Activated B cell treated with CpG ODN at 0.5 μM for 24 hours (primary cell): ENCODE measurements at regions of chr9 and their contacts with region 1.

Region 1: DNA sequence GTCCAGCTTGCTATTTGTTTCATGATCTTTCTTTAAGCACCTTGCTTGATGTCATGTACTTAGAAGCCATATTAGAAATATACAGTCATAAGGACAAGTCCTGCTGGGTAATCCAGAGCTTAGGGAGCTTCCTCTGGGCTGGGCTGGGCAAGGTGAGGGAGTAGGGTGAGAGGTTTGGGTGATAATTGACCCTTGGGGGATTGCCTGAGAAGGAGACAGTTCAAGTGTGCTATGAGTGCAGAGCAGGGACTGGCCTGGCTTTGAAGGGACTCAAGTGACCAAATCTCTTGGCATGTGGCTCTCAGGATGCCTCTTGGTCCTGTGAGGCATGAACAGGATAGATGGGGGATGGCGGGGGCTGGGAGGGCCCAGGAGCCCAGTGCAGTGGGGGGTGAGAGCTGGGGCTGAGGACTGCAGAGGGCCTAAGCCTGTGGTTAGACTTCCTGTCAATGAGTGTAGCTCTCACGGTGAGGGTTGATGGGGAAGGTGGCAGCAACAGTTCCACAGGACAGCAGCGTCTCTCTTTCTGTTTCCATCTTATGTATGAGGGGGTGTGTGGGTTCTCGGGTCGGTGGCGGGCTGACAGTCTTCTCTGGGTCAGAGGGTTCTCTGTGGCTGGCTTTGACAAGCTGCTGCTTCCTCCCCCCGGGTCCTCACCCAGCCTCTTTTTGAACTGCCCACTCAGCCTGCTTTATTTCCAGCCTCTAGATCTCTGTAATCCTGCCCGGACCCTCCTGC is 53.5 kb downstream of the RGS3 start:
- DNase-seq: peak; percentile 26
- ATAC-seq: peak; percentile 95
- H3K4me3 Mint-ChIP-seq: peak overlapping the region; percentile 62
- H3K27ac Mint-ChIP-seq: peak overlapping the region; percentile 83
- H3K4me1 Mint-ChIP-seq: peaks cover 29% of the 10 kb centered on the region
- H3K27me3 Mint-ChIP-seq: no peaks in the 10 kb centered on the region
- CTCF ChIP-seq: no peak

Region 2: GRCh38 chr9:113468716-113469448 is 48.1 kb before region 1 on chr9:
- CTCF ChIA-PET with region 1: no interaction called
- POLR2A ChIA-PET with region 1: no interaction called
- intact Hi-C with region 1: loop called (anchors 5 kb)
- DNase-seq: no peak
- ATAC-seq: no peak
- H3K4me3 Mint-ChIP-seq: no peak overlapping the region
- H3K27ac Mint-ChIP-seq: no peak overlapping the region
- H3K4me1 Mint-ChIP-seq: no peaks in the 10 kb centered on the region
- H3K27me3 Mint-ChIP-seq: no peaks in the 10 kb centered on the region
- CTCF ChIP-seq: no peak